AG04450 (cell line): ENCODE measurements at regions of chr4 and their contacts with region 1.

Region 1: GRCh38 chr4:127548990-127549925 is 83.5 kb upstream of the INTU start:
- DNase-seq: no peak
- H3K4me3 ChIP-seq: no peak overlapping the region
- H3K27ac ChIP-seq: no peak overlapping the region
- H3K27me3 ChIP-seq: no peaks in the 10 kb centered on the region
- CTCF ChIP-seq: no peak

Region 2: DNA sequence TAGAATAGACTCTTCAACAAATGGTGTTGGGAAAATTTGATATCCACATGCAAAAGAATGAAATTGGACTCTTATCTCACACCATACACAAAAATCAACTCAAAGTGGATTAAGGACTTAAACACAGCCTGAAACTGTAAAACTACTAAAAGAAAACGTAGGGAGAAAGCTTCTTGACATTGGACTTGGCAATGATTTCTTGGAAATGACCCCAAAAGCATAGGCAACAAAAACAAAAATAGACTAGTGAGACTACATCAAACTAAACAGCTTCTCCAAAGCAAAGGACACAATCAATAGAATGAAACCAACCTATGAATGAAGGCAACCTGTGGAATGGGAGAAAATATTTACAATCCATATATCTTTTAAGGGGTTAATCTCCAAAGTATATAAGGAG is 11.2 kb before region 1 on chr4:
- CTCF ChIA-PET with region 1: interaction called, 11 read pairs
- POLR2A ChIA-PET with region 1: no interaction called
- DNase-seq: no peak
- H3K4me3 ChIP-seq: no peak overlapping the region
- H3K27ac ChIP-seq: no peak overlapping the region
- H3K27me3 ChIP-seq: no peaks in the 10 kb centered on the region
- CTCF ChIP-seq: no peak